ENCODE measurements at regions of chr3 and their contacts with region 1.

Region 1: GRCh38 chr3:187319699-187320302 is 28.3 kb upstream of the MASP1 start:
- DNase-seq: peak; percentile 63 to 80
- ATAC-seq: peak; percentile 99

Region 2: DNA sequence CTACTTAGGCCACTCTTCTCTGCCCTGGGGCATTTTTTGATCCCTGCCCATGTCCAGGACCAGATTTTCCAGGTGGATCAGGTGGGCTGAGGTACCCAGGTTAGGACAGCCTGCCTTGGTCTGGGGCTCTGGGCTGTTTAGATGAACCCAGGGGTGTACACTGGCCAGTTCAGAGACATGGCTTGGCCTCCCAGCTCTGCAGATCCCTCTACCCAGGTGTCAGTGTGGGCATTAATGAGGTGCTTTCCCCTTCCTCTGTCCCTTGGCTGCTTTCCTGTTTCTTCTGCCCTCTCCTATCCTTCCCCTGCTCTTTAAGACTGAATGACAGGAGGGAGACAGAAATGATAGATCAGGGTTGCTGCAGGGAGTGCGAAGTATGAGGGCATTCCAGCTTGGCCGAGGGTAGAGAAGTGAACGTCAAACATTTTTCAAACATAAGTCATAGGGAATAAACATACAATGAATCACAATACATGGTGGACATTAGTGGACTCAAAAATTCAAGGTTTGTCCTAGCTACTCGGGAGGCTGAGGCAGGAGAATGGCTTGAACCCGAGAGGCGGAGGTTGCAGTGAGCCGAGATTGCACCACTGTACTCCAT is 92.0 kb before region 1 on chr3:
- intact Hi-C with region 1: loop called in 1 of 2 experiments (anchors 5 kb)
- DNase-seq: no peak
- ATAC-seq: no peak

Region 3: DNA sequence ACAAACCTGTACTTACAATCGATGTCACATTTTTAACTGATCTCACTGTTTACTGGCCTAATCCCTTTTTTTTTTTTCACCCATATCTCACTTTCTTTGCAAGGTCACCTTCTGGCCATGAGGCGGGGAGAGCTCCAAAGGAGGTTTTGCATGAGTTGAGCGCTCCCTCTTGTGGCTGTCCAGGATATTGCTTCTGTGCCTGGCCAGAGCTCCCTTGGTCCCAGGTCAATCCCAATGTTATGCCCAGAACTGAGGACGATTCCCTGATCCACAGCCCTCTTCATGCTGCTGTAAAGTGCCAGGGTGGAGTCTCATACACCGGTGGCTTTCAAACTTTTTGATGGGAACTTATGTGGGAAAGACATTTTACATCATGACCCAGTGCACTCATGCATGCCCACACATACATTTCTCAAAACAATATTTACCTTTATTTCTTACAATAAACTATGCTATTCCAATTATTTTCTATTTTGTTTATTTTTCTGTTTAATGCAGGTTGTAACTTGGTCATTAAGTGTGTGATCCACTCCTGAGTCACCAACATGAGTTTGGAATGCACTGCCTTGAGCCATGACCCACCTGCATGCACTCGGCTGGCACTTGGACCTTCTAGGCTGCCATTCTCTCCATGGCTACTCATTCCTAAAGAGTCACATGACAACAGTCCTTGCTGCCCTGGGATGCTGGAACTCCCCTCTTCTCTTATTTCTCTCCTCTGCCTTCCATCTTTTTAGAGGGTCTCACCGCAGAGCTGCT is 360.0 kb after region 1 on chr3:
- intact Hi-C with region 1: loop called (anchors 2 to 5 kb)
- DNase-seq: peak; percentile 49 to 78
- ATAC-seq: peak; percentile 95

Measured in left colon (tissue), 2 donors.